H1 (cell line): ENCODE measurements at regions of chr7 and their contacts with region 1.

Region 1: GRCh38 chr7:124152859-124153692 is 120.2 kb upstream of the TMEM229A start:
- DNase-seq: peak in 1 of 2 experiments; percentile 33
- H3K4me3 ChIP-seq: no peak overlapping the region
- H3K27ac ChIP-seq: no peak overlapping the region
- H3K4me1 ChIP-seq: no peaks in the 10 kb centered on the region
- H3K27me3 ChIP-seq: no peaks in the 10 kb centered on the region
- CTCF ChIP-seq: peak in 2 of 3 experiments; percentile 63 to 73; a peak in 3 of 4 replicates
- EP300 ChIP-seq: no peak
- POLR2A ChIP-seq: no peak
- RAD21 ChIP-seq: peak; percentile 70 to 77

Region 2: DNA sequence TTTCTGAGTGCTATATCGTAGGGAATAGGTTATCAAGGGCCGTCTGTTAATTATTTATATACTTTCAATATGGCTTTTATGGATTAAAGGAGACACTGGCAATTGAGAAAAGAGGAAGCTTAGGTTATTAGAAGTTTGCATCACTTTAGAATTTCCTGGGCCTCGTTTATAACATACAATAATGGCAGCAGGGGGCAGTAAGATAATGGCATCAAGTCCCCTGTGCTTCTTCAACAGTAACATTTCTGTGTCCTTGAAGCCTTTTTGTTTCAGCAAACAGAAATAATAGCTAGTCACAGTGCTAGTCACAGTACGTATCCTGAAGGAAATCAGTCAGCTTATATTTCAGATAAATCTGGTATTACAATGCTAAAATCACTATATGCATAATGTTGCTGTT is 186.1 kb before region 1 on chr7:
- CTCF ChIA-PET with region 1: no interaction called
- POLR2A ChIA-PET with region 1: no interaction called
- DNase-seq: no peak
- H3K4me3 ChIP-seq: no peak overlapping the region
- H3K27ac ChIP-seq: no peak overlapping the region
- H3K4me1 ChIP-seq: peaks cover 0 to 2% (median 0%) of the 10 kb centered on the region in 4 experiments; a peak in 1 of 7 replicates
- H3K27me3 ChIP-seq: no peaks in the 10 kb centered on the region
- CTCF ChIP-seq: peak in 2 of 3 experiments; percentile 14 to 31; a peak in 1 of 4 replicates
- EP300 ChIP-seq: no peak
- POLR2A ChIP-seq: no peak
- RAD21 ChIP-seq: peak; percentile 50 to 62

Region 3: GRCh38 chr7:124059375-124059774 is 93.7 kb before region 1 on chr7:
- CTCF ChIA-PET with region 1: no interaction called
- POLR2A ChIA-PET with region 1: no interaction called
- DNase-seq: no peak
- H3K4me3 ChIP-seq: no peak overlapping the region
- H3K27ac ChIP-seq: no peak overlapping the region
- H3K4me1 ChIP-seq: no peaks in the 10 kb centered on the region
- H3K27me3 ChIP-seq: no peaks in the 10 kb centered on the region
- CTCF ChIP-seq: no peak
- EP300 ChIP-seq: no peak
- POLR2A ChIP-seq: no peak
- RAD21 ChIP-seq: no peak

Region 4: GRCh38 chr7:124101173-124101768 is 51.8 kb before region 1 on chr7:
- CTCF ChIA-PET with region 1: interaction called, 28 read pairs
- POLR2A ChIA-PET with region 1: no interaction called
- DNase-seq: no peak
- H3K4me3 ChIP-seq: no peak overlapping the region
- H3K27ac ChIP-seq: no peak overlapping the region
- H3K4me1 ChIP-seq: no peaks in the 10 kb centered on the region
- H3K27me3 ChIP-seq: no peaks in the 10 kb centered on the region
- CTCF ChIP-seq: peak; percentile 26 to 52 (median 46); a peak in 3 of 4 replicates
- EP300 ChIP-seq: no peak
- POLR2A ChIP-seq: no peak
- RAD21 ChIP-seq: peak; percentile 73 to 74

Region 5: GRCh38 chr7:124188576-124188975 is 35.5 kb after region 1 on chr7:
- CTCF ChIA-PET with region 1: interaction called, 18 read pairs
- POLR2A ChIA-PET with region 1: no interaction called
- DNase-seq: no peak
- H3K4me3 ChIP-seq: no peak overlapping the region
- H3K27ac ChIP-seq: no peak overlapping the region
- H3K4me1 ChIP-seq: no peaks in the 10 kb centered on the region; a peak in 1 of 7 replicates
- H3K27me3 ChIP-seq: no peaks in the 10 kb centered on the region
- CTCF ChIP-seq: no peak
- EP300 ChIP-seq: no peak
- POLR2A ChIP-seq: no peak
- RAD21 ChIP-seq: no peak

Region 6: DNA sequence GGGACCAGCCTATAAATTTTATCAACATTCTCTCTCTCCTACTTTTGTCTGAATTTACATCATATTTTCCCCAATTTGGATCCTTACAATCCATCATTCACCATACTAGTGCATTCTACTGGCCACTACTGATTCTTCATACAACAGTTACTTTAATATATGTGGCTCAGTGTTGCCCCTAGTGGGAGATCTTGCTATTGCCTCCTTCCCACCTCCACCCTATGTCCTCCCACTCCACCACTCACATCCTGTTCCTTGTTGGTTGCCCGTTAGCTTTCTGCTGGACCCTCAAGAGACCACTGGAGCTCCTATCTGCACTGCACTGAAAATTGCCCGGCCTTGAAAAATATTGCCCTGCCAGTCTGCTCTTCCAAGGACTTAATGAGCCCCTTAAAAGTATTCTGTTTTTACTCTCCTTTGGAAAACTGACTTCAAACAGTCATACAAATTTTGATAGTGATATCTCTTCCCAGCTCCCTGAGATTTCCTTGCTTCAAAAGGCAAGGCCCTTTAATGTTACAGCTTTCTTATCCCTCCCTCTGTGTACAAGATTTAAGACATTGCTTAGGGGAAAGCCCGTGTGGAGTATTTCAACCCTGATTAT is 123.0 kb after region 1 on chr7:
- CTCF ChIA-PET with region 1: interaction called, 17 read pairs
- POLR2A ChIA-PET with region 1: no interaction called
- DNase-seq: peak; percentile 23 to 77
- H3K4me3 ChIP-seq: no peak overlapping the region
- H3K27ac ChIP-seq: no peak overlapping the region
- H3K4me1 ChIP-seq: peaks cover 0 to 7% (median 2%) of the 10 kb centered on the region in 4 experiments; a peak in 2 of 7 replicates
- H3K27me3 ChIP-seq: no peaks in the 10 kb centered on the region
- CTCF ChIP-seq: peak; percentile 64 to 80 (median 72)
- EP300 ChIP-seq: no peak
- POLR2A ChIP-seq: no peak
- RAD21 ChIP-seq: peak; percentile 62 to 63

Region 7: DNA sequence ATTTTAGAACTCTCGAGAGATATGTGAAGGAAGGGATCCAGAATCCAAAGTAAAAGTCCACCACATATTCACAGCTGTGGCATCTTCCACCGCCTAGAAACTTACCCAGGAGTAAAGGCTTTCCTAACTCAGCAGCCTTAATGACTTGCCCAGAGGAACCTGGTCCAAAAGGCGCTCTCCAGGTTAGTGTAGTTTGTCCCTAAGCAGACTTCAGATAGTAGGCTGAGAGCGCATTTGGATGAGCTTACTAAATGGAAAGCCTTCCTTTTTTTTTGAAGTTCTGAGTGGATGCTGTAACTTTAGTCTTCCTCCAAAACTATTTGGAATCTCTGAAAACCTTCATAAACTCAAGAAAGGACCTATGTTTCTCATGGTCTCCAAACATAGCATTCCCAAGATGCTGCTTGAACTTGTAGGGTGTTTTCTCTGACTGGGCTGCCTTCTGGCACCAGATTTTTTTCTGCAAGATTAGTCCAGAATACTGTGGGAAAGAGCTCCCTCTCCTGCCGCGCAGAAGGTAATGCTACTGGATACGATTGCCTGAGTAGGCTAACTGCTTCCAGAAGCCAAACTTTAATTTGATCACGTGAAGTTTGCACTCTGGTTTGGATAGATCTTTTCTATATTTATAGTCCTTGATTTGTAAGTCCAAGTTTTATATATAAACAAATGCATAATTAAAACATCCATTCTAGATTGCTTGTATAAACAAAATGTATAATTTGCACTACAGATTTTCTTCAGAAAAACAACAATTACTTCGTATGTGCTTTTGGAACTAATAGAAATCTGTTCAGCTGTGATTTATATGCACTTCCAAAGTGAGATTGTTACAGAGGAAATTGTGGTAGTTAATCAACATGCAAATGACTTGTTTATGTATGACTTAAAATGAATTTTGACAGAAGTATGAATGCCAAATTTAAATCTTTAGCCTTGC is 632.1 kb after region 1 on chr7:
- CTCF ChIA-PET with region 1: interaction called, 24 read pairs
- POLR2A ChIA-PET with region 1: no interaction called
- DNase-seq: peak in 1 of 2 experiments; percentile 39
- H3K4me3 ChIP-seq: no peak overlapping the region
- H3K27ac ChIP-seq: no peak overlapping the region
- H3K4me1 ChIP-seq: peaks cover 0 to 8% (median 3%) of the 10 kb centered on the region in 4 experiments; a peak in 5 of 7 replicates
- H3K27me3 ChIP-seq: no peaks in the 10 kb centered on the region
- CTCF ChIP-seq: peak; percentile 44 to 88 (median 83)
- EP300 ChIP-seq: no peak
- POLR2A ChIP-seq: no peak
- RAD21 ChIP-seq: peak; percentile 98 to 100

Region 8: GRCh38 chr7:124857672-124858235 is 704.7 kb after region 1 on chr7:
- CTCF ChIA-PET with region 1: interaction called, 15 read pairs
- POLR2A ChIA-PET with region 1: no interaction called
- DNase-seq: no peak
- H3K4me3 ChIP-seq: no peak overlapping the region
- H3K27ac ChIP-seq: no peak overlapping the region
- H3K4me1 ChIP-seq: no peaks in the 10 kb centered on the region
- H3K27me3 ChIP-seq: no peaks in the 10 kb centered on the region
- CTCF ChIP-seq: no peak
- EP300 ChIP-seq: no peak
- POLR2A ChIP-seq: no peak
- RAD21 ChIP-seq: no peak